ENCODE measurements at regions of chr2 and their contacts with region 1.

Region 1: DNA sequence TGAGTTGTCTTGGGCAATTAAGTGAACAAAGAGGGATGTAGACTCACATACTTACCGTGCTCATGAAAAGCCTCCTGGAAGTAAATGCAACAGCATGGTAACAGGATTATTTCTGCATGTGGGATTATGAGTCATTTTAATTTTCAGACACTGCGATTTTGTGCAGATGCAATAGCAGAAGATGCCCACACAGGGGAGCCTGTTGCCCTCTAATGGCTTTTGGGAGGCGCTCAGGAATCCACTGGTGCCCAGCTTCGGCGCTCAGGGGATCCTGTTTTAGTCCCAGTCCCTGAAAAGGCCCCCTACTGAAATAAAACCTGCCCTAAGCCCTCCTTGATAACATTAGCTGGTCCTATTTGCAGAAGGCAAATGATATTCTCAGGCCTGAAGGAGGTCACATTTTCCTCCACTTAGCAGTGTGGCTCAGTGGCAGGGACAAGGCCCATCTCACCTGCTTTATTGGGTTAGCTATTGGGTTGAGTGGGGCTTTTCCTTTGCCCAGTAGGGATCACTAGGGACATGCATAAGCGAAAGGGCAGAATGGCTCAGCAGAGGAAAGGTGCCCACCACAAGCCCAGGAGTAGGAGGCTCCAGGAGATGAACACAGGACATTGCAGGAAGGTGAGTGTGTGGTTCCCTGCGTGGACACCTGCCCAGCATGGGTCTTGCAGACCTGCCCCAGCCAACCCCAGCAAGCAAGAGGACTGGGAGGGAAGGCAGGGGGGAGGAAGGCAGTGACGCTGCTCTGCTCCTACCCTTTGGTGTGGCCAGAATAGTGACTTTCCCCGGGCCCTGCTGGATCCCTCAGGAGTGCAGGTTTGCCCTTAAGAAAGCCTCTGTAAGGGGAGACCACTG is 26.5 kb upstream of the KCNS3 start:
- DNase-seq: no peak
- H3K4me3 ChIP-seq: no peak overlapping the region
- H3K27ac ChIP-seq: no peak overlapping the region
- H3K4me1 ChIP-seq: no peaks in the 10 kb centered on the region
- H3K27me3 ChIP-seq: peaks cover 0 to 15% (median 0%) of the 10 kb centered on the region in 7 donors
- CTCF ChIP-seq: peak; percentile 31 to 72 (median 66)
- POLR2A ChIP-seq: no peak

Region 2: DNA sequence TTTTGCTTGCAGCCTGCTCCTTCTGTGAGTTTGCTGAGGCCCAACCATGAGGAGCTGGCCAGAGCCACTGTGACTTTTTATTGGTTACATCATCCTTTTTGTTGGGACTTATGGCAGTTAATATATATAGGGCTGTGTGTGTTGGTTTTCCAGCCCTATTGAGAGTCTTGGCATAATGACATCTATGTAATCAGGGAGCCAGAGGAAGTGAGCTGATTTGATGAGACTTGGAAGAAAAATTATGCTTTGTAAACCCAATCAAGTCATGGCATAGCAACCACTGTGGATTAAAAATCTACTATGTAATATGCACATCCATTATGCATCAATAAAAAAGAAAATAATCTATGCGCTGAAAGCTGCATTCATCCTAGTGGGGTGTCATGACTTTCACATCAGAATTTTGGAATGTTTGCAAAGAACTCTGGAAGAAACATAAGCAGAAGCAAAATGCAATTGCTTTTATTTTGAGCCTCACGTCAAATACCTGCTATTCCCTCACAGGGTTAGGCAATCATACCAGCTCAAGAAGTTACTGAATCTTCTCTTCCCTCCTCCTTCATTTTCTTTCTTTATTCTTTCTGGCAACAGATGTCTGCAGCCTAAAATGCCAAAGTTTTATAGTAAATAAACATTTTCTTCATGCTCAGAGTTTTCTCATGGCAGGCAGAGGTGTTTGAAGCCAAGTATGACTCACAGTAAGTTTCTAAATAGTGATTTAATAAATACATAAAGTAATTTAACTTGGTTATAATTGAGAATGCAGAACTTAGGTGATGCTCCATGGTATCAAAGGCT is 335.1 kb after region 1 on chr2:
- intact Hi-C with region 1: loop called (anchors 10 kb)
- DNase-seq: no peak
- H3K4me3 ChIP-seq: no peak overlapping the region
- H3K27ac ChIP-seq: no peak overlapping the region
- H3K4me1 ChIP-seq: no peaks in the 10 kb centered on the region
- H3K27me3 ChIP-seq: peaks cover 0 to 22% (median 0%) of the 10 kb centered on the region in 7 donors
- CTCF ChIP-seq: no peak
- POLR2A ChIP-seq: no peak

Region 3: DNA sequence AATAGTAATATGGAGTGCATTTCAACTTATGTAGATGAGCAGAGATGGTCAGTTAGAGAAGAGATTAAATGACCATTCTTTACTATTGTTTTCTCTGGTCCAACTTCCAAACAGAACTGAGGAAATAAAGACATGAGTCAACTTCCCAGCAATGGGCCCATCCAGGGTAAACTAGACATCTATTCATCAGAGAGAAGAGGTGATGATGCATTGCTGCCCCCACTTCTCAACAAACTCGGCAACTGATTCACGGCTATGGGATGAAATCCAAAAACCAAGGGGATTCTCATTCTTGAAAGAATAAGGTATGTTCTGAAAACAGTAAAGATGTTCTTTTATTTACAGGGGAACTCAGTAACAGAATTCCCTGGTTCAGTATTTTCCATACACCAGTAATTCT is 517.8 kb after region 1 on chr2:
- intact Hi-C with region 1: loop called (anchors 5 kb)
- DNase-seq: no peak
- H3K4me3 ChIP-seq: no peak overlapping the region
- H3K27ac ChIP-seq: no peak overlapping the region
- H3K4me1 ChIP-seq: no peaks in the 10 kb centered on the region
- H3K27me3 ChIP-seq: peaks cover 0 to 14% (median 0%) of the 10 kb centered on the region in 7 donors
- CTCF ChIP-seq: no peak
- POLR2A ChIP-seq: no peak

Measured in spleen (tissue), 13 donors.